CD4-positive, alpha-beta T cell (primary cell): ENCODE measurements at regions of chr19 and their contacts with region 1.

Region 1: DNA sequence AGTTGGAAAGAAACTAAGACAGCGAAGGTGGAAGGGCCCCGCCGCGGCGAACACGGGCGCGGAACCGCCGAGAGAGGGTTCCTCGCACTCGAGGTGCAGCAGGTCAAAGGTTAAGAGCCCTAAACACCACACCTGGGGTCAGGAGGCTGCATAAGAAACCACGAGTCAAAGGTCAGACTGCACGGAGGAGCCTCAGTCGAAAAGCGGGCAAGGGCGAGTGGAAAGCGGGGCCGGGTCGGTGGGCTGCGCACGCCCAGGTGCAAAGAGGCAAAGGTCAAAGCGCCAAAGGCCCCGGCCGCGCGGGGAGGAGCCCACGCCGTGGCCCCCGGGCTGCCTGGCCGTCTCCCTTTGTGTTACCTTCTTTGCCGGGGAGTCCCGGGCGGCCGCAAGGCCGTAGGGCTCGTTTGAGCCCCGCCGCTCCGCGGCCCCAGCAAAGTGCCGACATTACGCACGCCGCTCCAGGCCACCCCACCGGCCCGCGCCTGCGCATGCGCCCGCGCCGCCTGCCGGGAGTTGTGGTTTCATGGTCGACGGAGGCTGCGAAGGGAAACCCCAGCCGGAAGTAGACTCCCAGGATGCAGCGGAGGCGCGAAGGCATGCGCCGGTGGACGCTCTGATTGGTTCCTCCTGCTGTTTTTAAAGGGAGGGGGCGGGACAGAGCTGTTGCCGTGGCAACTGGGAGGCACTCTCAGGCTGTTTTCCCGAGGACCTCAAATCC is at the start of gene POLRMT:
- DNase-seq: peak; percentile 90 to 99 (median 95)
- ATAC-seq: peak; percentile 97
- H3K4me3 ChIP-seq: peak within 1 kb of the TSS; percentile 90
- H3K4me3 Mint-ChIP-seq: peak within 1 kb of the TSS; percentile 98
- H3K27ac ChIP-seq: peak within 1 kb of the TSS; percentile 52 to 67
- H3K27ac Mint-ChIP-seq: peak within 1 kb of the TSS; percentile 85
- H3K4me1 ChIP-seq: peaks cover 42% of the 10 kb centered on the region
- H3K4me1 Mint-ChIP-seq: peaks cover 35% of the 10 kb centered on the region
- H3K27me3 ChIP-seq: no peaks in the 10 kb centered on the region
- H3K27me3 Mint-ChIP-seq: no peaks in the 10 kb centered on the region
- CTCF ChIP-seq: no peak
- total RNA-seq, gene POLRMT: 54.4 to 56.2 TPM

Region 2: GRCh38 chr19:572140-572742 is 61.0 kb before region 1 on chr19 and contains the start of gene BSG:
- CTCF ChIA-PET with region 1: no interaction called
- POLR2A ChIA-PET with region 1: no interaction called
- intact Hi-C with region 1: loop called in 1 of 2 experiments (anchors 5 kb)
- DNase-seq: peak; percentile 97 to 100 (median 98)
- ATAC-seq: peak; percentile 83
- H3K4me3 ChIP-seq: peak within 1 kb of the TSS; percentile 94
- H3K4me3 Mint-ChIP-seq: peak within 1 kb of the TSS; percentile 99
- H3K27ac ChIP-seq: peak within 1 kb of the TSS; percentile 69 to 87
- H3K27ac Mint-ChIP-seq: peak within 1 kb of the TSS; percentile 95
- H3K4me1 ChIP-seq: peaks cover 60% of the 10 kb centered on the region
- H3K4me1 Mint-ChIP-seq: peaks cover 40% of the 10 kb centered on the region
- H3K27me3 ChIP-seq: no peaks in the 10 kb centered on the region
- H3K27me3 Mint-ChIP-seq: no peaks in the 10 kb centered on the region
- CTCF ChIP-seq: no peak
- total RNA-seq, gene BSG: 68.7 to 71.6 TPM

Region 3: DNA sequence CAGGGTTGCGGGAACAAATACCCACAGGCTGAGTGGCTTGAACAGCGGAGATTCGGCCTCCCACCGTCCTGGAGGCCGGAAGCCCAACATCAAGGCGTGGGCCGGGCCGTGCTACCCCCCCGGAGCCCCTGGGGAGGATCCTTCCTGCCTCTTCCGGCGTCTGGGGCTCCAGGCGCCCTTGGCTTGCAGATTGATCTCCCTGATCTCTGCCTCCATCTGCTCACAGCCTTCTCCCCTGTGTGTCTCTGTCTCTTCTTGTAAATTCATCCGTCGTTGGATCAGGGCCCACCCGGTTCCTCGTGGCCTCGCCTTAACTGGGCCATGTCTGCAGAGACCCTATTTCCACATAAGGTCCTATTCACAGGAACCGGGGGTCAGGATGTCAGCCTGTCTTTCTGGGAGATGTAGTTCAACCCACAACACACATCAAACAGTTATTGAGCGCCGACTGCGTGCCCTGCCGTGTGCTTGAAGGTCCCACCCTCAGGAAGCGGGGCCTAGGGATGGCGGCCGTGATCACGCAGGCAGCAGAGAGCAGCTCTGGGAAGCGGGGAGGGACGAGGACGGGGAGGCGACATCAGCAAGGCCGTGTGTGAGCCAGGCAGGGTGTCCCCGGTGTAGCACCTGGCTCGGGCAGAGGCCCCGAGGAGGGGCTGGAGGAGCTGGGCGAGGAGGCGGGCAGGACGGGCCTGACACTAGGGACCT is 22.3 kb before region 1 on chr19:
- CTCF ChIA-PET with region 1: no interaction called
- POLR2A ChIA-PET with region 1: no interaction called
- intact Hi-C with region 1: loop called in 1 of 2 experiments (anchors 2 kb)
- DNase-seq: peak; percentile 33 to 90 (median 56)
- ATAC-seq: peak; percentile 71
- H3K4me3 ChIP-seq: peak overlapping the region; percentile 65
- H3K4me3 Mint-ChIP-seq: peak overlapping the region; percentile 95
- H3K27ac ChIP-seq: peak overlapping the region; percentile 29 to 67
- H3K27ac Mint-ChIP-seq: peak overlapping the region; percentile 85
- H3K4me1 ChIP-seq: peaks cover 43% of the 10 kb centered on the region
- H3K4me1 Mint-ChIP-seq: peaks cover 25% of the 10 kb centered on the region
- H3K27me3 ChIP-seq: no peaks in the 10 kb centered on the region
- H3K27me3 Mint-ChIP-seq: peaks cover 3% of the 10 kb centered on the region
- CTCF ChIP-seq: no peak